ENCODE measurements at regions of chr19 and their contacts with region 1.

Region 1: DNA sequence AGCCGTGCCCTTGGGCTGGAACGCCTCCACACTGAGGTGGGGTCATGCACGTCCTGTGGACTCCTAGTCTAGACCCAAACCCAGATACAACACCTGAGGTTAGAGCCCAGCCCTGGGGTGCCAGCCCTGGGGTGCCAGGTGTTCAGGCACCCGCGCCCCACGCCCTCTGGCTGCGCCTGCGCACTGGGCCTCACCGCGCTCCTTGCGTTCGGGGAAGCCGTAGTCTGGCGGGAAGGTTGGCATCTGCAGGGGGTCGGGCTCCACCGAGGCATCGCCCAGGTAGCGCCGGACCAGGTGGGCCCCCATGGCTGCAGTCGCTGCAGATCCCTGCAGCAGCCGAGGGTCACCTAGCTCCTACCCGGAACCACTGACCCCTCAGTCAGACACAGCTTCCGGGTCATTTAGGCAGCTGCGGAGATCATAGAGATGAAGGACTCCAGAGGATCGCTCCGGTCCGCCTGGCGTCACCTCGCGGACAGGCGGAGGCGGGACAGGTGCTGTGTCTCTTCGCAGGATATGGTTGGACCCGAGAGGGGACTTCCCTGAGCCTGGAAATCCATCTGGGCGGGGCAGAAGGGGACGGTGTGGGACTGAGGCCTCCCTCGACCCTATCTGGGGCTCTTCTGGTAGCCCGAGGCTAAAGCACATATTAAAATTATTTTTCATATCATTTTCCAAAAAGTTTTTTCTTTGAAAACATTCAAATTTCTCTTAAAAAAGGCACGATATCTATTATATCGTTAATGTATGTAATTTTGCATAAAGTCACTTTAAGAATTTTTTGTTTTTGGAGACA is at the start of gene NDUFB7:
- DNase-seq: peak; percentile 91 to 94
- ATAC-seq: peak; percentile 97 to 99 (median 98)
- H3K4me3 ChIP-seq: peak within 1 kb of the TSS; percentile 87
- H3K27ac ChIP-seq: peak within 1 kb of the TSS; percentile 81
- H3K4me1 ChIP-seq: peaks cover 22% of the 10 kb centered on the region
- H3K27me3 ChIP-seq: no peaks in the 10 kb centered on the region
- CTCF ChIP-seq: peak; percentile 76
- total RNA-seq, gene NDUFB7: 216 to 306 (median 287) TPM

Region 2: DNA sequence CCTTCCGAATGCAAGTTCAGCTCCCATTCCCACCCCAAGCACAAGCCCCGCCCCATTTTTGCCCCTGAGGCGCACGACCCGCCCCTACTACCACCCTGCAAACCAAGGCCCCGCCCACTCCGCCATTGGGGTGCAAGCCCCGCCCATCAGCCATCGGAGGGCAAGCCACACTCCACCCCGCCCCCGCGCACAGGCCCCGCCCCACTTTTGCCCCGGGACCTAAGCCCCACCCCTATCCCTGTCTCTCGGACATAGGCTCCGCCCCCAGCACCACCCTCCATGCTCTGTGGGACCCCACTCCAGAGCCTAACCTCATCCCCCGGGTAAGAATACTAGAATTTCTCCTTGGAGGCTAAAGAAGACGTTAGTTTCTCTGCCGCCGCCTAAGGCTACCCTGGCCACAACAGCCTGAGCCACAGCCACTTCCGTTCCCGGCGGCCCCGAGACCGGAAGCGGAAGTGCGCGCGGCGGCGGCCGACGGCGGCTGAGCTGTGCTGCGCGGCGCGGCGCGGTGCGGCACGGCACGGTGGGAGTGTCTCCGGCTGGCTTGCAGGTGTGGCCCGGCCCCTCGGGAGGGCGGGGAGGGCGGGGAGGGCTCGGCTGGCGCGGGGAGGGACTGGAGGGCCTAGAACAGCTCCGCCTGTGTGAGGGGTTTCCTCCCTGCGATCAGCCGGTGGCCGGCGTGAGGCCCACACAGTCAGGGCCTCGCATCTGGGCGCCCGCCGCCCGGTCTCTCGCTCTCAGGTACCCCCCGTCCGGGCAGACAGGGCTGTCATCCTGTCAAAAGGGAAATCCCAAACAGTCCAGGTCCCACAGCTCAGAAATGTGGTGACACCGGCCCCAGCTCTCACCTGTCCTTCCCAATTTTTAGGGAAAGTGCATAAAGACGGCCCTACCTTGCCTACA is 118.0 kb after region 1 on chr19 and contains the start of gene ZNF333:
- intact Hi-C with region 1: loop called (anchors 2 to 10 kb)
- DNase-seq: peak; percentile 97 to 98
- ATAC-seq: peak; percentile 99 to 100 (median 99)
- H3K4me3 ChIP-seq: peak within 1 kb of the TSS; percentile 86
- H3K27ac ChIP-seq: peak within 1 kb of the TSS; percentile 97
- H3K4me1 ChIP-seq: peaks cover 10% of the 10 kb centered on the region
- H3K27me3 ChIP-seq: no peaks in the 10 kb centered on the region
- CTCF ChIP-seq: no peak
- total RNA-seq, gene ZNF333: 6.8 to 9.7 (median 8.5) TPM

Region 3: GRCh38 chr19:14889994-14890642 is 318.2 kb after region 1 on chr19:
- intact Hi-C with region 1: loop called in 1 of 2 experiments (anchors 10 kb)
- DNase-seq: no peak
- ATAC-seq: no peak
- H3K4me3 ChIP-seq: no peak overlapping the region
- H3K27ac ChIP-seq: no peak overlapping the region
- H3K4me1 ChIP-seq: no peaks in the 10 kb centered on the region
- H3K27me3 ChIP-seq: peaks cover 0 to 9% (median 0%) of the 10 kb centered on the region in 3 donors
- CTCF ChIP-seq: no peak